Caco-2 (cell line): ENCODE measurements at regions of chr7 and their contacts with region 1.

Region 1: GRCh38 chr7:106056513-106057203 is 55.5 kb downstream of the SYPL1 start:
- DNase-seq: peak; percentile 77
- H3K4me3 ChIP-seq: no peak overlapping the region
- H3K4me3 Mint-ChIP-seq: no peak overlapping the region
- H3K27ac Mint-ChIP-seq: no peak overlapping the region
- H3K4me1 ChIP-seq: no peaks in the 10 kb centered on the region; the same call in 1 of the 2 replicates
- H3K4me1 Mint-ChIP-seq: no peaks in the 10 kb centered on the region
- H3K27me3 ChIP-seq: peaks cover 1% of the 10 kb centered on the region; the same call in 1 of the 2 replicates
- H3K27me3 Mint-ChIP-seq: peaks cover 6% of the 10 kb centered on the region
- CTCF ChIP-seq: peak; percentile 84 to 91

Region 2: GRCh38 chr7:105876091-105876963 is 180.3 kb before region 1 on chr7 and contains the start of gene ATXN7L1:
- CTCF ChIA-PET with region 1: no interaction called
- POLR2A ChIA-PET with region 1: no interaction called
- intact Hi-C with region 1: no loop called
- DNase-seq: peak; percentile 97
- H3K4me3 ChIP-seq: peak within 1 kb of the TSS; percentile 95
- H3K4me3 Mint-ChIP-seq: peak within 1 kb of the TSS; percentile 97
- H3K27ac Mint-ChIP-seq: peak within 1 kb of the TSS; percentile 99
- H3K4me1 ChIP-seq: peaks cover 9% of the 10 kb centered on the region; the same call in 1 of the 2 replicates
- H3K4me1 Mint-ChIP-seq: peaks cover 15% of the 10 kb centered on the region
- H3K27me3 ChIP-seq: no peaks in the 10 kb centered on the region
- H3K27me3 Mint-ChIP-seq: no peaks in the 10 kb centered on the region
- CTCF ChIP-seq: peak; percentile 9 to 63
- total RNA-seq, gene ATXN7L1: 14.1 and 18.2 TPM in 2 replicates

Region 3: GRCh38 chr7:106083717-106084116 is 27.1 kb after region 1 on chr7:
- CTCF ChIA-PET with region 1: no interaction called
- POLR2A ChIA-PET with region 1: no interaction called
- intact Hi-C with region 1: no loop called
- DNase-seq: no peak
- H3K4me3 ChIP-seq: no peak overlapping the region
- H3K4me3 Mint-ChIP-seq: no peak overlapping the region
- H3K27ac Mint-ChIP-seq: no peak overlapping the region
- H3K4me1 ChIP-seq: no peaks in the 10 kb centered on the region
- H3K4me1 Mint-ChIP-seq: peaks cover 7% of the 10 kb centered on the region
- H3K27me3 ChIP-seq: no peaks in the 10 kb centered on the region
- H3K27me3 Mint-ChIP-seq: no peaks in the 10 kb centered on the region
- CTCF ChIP-seq: no peak

Region 4: DNA sequence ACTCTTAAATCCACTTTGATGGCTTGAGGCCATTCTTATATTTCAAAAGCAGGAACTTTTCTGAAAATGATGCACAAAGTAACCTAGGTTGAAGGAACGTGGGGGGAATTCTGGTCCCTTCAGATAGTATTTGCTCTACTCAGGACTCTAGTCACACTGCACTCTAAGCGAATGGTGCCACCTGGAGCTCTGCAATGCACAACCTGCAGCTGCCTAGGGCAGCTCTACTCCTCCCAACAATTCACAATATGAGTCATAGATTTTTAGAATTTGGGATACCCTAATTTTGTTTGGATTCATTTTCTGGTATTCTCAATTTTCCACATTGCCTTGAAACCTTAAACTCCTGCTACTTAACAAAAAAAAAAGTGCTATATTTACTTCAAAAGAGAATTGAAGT is 38.1 kb after region 1 on chr7:
- CTCF ChIA-PET with region 1: no interaction called
- POLR2A ChIA-PET with region 1: no interaction called
- intact Hi-C with region 1: loop called (anchors 1 kb)
- DNase-seq: no peak
- H3K4me3 ChIP-seq: no peak overlapping the region
- H3K4me3 Mint-ChIP-seq: no peak overlapping the region
- H3K27ac Mint-ChIP-seq: no peak overlapping the region
- H3K4me1 ChIP-seq: no peaks in the 10 kb centered on the region
- H3K4me1 Mint-ChIP-seq: no peaks in the 10 kb centered on the region
- H3K27me3 ChIP-seq: no peaks in the 10 kb centered on the region
- H3K27me3 Mint-ChIP-seq: no peaks in the 10 kb centered on the region
- CTCF ChIP-seq: peak in 1 of 2 experiments; percentile 15

Region 5: DNA sequence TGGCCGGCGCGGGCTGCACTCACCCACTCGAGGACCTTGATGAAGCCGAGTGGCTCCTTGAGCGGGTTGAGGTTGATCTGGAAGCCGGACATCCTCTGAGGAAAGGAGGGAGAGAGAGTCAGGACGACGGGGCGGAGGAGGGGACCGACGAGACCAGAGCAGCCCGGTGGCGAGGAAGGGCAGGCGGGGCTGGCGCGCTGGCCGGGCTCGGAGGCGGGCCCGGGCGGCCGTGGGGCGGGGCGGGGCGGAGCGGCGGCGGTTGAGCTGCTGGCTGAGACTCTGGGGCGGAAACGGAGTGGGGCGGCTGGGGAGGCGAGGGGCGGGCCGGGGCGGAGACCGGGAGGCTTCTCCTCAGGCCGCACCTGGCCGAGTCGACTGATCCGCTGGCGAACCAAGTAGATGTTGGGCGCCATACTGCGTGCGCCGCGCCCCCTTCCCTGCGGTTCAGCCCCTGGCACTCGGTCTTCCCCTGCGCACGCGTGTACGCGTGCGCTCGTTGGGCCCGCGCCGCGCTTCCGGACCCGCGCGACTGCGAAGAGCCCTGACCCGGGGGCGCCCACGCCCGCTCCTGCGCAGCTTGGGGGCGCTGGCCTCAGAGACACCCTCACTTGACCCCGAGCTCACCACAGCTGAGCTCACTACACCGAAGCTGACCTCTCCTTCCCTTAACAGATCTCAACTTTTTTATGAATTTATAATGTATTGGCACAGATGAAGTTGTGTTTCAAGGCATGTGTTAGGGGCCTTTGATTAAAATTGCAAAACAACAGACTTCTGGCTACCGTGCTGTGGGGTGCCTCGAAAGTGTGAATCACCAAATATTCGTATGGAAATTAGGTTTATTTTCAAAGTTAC is 55.7 kb after region 1 on chr7 and contains the start of gene SYPL1:
- CTCF ChIA-PET with region 1: no interaction called
- POLR2A ChIA-PET with region 1: no interaction called
- intact Hi-C with region 1: loop called (anchors 1 kb)
- DNase-seq: peak; percentile 96
- H3K4me3 ChIP-seq: peak within 1 kb of the TSS; percentile 59
- H3K4me3 Mint-ChIP-seq: peak within 1 kb of the TSS; percentile 90
- H3K27ac Mint-ChIP-seq: peak within 1 kb of the TSS; percentile 88
- H3K4me1 ChIP-seq: peaks cover 25% of the 10 kb centered on the region
- H3K4me1 Mint-ChIP-seq: peaks cover 18% of the 10 kb centered on the region
- H3K27me3 ChIP-seq: no peaks in the 10 kb centered on the region
- H3K27me3 Mint-ChIP-seq: no peaks in the 10 kb centered on the region
- CTCF ChIP-seq: peak in 1 of 2 experiments; percentile 19
- total RNA-seq, gene SYPL1: 78.7 and 81.0 TPM in 2 replicates

Region 6: DNA sequence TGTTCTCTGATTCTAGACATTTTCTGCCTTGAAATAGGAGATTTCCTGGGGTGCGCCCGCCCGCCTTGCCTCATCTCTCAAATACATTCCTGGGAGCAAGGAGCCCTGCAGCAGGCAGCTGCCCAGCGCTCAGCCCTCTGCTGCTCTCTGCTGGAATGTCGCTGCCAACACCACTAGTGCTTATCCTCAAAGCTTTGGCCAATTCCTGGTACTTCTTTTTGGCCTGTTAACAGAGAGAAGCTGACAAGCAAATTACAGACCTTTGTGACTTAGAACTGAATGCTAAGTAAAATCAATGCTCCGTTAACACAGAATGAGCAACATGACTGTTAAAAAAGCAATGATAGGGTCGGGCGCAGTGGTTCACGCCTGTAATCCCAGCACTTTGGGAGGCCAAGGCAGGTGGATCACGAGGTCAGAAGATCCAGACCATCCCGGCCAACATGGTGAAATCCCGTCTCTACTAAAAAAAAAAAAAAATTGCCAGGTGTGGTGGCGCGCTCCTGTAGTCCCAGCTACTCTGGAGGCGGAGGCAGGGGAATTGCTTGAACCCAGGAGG is 97.3 kb after region 1 on chr7:
- CTCF ChIA-PET with region 1: interaction called, 11 read pairs
- POLR2A ChIA-PET with region 1: no interaction called
- intact Hi-C with region 1: loop called (anchors 1 kb)
- DNase-seq: peak; percentile 79 to 85
- H3K4me3 ChIP-seq: no peak overlapping the region
- H3K4me3 Mint-ChIP-seq: no peak overlapping the region
- H3K27ac Mint-ChIP-seq: no peak overlapping the region
- H3K4me1 ChIP-seq: peaks cover 34% of the 10 kb centered on the region
- H3K4me1 Mint-ChIP-seq: peaks cover 13% of the 10 kb centered on the region
- H3K27me3 ChIP-seq: no peaks in the 10 kb centered on the region
- H3K27me3 Mint-ChIP-seq: peaks cover 14% of the 10 kb centered on the region
- CTCF ChIP-seq: peak; percentile 91 to 93

Region 7: DNA sequence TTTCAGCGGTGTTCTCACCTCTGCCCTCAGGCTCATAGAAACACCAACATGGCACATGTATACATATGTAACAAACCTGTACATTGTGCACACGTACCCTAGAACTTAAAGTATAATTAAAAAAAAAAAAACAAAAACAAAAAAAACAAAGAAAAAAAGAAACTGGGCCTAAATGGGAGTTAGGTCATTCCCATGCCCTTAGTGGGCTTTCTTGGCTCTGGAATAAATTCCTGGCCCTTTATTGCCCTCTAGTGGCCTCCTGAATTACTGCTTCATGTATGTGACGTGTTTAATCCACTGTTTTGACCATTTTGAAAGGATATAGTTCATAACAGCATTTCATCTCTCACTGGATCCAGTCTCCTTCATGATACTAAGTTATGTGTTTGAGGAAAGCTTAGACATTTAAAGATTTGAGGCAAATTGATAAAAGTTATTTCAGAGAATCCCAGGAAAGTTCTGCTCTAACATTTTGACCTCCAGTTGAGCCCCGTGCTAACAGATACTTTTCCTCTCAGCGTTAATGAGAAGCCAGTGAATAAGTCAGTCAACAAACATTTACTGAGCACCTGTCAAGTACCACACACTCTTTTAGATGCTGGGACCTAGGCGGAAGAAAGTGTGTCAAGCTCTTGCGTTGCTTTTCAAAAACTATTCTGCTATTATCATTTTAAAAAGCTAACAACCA is 110.1 kb after region 1 on chr7:
- CTCF ChIA-PET with region 1: no interaction called
- POLR2A ChIA-PET with region 1: no interaction called
- intact Hi-C with region 1: loop called (anchors 1 kb)
- DNase-seq: peak in 1 of 2 experiments; percentile 74
- H3K4me3 ChIP-seq: no peak overlapping the region
- H3K4me3 Mint-ChIP-seq: no peak overlapping the region
- H3K27ac Mint-ChIP-seq: no peak overlapping the region
- H3K4me1 ChIP-seq: no peaks in the 10 kb centered on the region
- H3K4me1 Mint-ChIP-seq: no peaks in the 10 kb centered on the region
- H3K27me3 ChIP-seq: no peaks in the 10 kb centered on the region
- H3K27me3 Mint-ChIP-seq: peaks cover 4% of the 10 kb centered on the region
- CTCF ChIP-seq: peak; percentile 74 to 76

Region 8: DNA sequence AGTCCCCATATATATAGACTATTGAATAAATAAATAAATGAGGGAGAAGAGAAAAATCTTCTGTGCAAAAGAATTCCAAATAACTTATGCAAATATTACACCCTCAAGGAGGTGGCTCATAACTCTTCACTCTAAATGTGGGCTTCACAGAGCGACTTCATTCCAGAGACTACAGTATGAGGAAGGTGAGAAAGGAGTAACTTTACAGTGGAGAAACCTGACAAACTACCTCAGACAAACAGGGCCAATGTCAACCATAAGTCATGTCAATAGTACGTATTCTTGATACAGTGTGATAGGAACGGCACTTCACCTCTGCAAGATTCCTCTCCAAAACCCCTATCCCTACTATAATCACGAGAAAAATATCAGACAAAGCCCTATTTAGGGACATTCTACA is 386.5 kb after region 1 on chr7:
- CTCF ChIA-PET with region 1: no interaction called
- POLR2A ChIA-PET with region 1: no interaction called
- intact Hi-C with region 1: no loop called
- DNase-seq: no peak
- H3K4me3 ChIP-seq: no peak overlapping the region
- H3K4me3 Mint-ChIP-seq: no peak overlapping the region
- H3K27ac Mint-ChIP-seq: no peak overlapping the region
- H3K4me1 ChIP-seq: no peaks in the 10 kb centered on the region
- H3K4me1 Mint-ChIP-seq: peaks cover 8% of the 10 kb centered on the region
- H3K27me3 ChIP-seq: no peaks in the 10 kb centered on the region
- H3K27me3 Mint-ChIP-seq: no peaks in the 10 kb centered on the region
- CTCF ChIP-seq: no peak

Region 9: GRCh38 chr7:106461993-106462859 is 405.6 kb after region 1 on chr7:
- CTCF ChIA-PET with region 1: no interaction called
- POLR2A ChIA-PET with region 1: no interaction called
- intact Hi-C with region 1: loop called (anchors 10 kb)
- DNase-seq: peak in 1 of 2 experiments; percentile 41
- H3K4me3 ChIP-seq: no peak overlapping the region
- H3K4me3 Mint-ChIP-seq: peak overlapping the region; percentile 25
- H3K27ac Mint-ChIP-seq: peak overlapping the region; percentile 89
- H3K4me1 ChIP-seq: peaks cover 39% of the 10 kb centered on the region
- H3K4me1 Mint-ChIP-seq: peaks cover 38% of the 10 kb centered on the region
- H3K27me3 ChIP-seq: no peaks in the 10 kb centered on the region
- H3K27me3 Mint-ChIP-seq: no peaks in the 10 kb centered on the region
- CTCF ChIP-seq: peak; percentile 39 to 54